ENCODE measurements at regions of chrX and their contacts with region 1.

Region 1: DNA sequence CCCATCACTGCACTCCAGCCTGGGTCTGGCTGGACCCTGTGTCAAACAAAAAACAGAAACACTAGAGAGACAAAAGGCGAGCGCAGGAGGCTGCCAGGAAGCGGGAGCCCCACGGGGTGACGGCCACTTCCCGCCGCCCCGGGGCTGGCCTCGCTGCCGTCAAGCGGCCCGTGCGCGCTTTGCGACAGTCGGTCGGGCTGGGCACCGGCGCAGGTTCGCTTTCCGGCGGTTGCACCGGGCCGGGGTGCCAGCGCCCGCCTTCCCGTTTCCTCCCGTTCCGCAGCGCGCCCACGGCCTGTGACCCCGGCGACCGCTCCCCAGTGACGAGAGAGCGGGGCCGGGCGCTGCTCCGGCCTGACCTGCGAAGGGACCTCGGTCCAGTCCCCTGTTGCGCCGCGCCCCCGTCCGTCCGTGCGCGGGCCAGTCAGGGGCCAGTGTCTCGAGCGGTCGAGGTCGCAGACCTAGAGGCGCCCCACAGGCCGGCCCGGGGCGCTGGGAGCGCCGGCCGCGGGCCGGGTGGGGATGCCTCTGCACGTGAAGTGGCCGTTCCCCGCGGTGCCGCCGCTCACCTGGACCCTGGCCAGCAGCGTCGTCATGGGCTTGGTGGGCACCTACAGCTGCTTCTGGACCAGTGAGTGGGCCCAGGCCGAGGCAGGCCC is at the start of gene TAFAZZIN:
- DNase-seq: peak; percentile 41 to 80
- H3K4me3 ChIP-seq: peak within 1 kb of the TSS; percentile 77
- H3K27ac ChIP-seq: peak within 1 kb of the TSS; percentile 32
- H3K4me1 ChIP-seq: peaks cover 19% of the 10 kb centered on the region
- H3K27me3 ChIP-seq: no peaks in the 10 kb centered on the region
- CTCF ChIP-seq: no peak
- total RNA-seq, gene TAFAZZIN: 95.8 and 134 TPM in 2 replicates

Region 2: DNA sequence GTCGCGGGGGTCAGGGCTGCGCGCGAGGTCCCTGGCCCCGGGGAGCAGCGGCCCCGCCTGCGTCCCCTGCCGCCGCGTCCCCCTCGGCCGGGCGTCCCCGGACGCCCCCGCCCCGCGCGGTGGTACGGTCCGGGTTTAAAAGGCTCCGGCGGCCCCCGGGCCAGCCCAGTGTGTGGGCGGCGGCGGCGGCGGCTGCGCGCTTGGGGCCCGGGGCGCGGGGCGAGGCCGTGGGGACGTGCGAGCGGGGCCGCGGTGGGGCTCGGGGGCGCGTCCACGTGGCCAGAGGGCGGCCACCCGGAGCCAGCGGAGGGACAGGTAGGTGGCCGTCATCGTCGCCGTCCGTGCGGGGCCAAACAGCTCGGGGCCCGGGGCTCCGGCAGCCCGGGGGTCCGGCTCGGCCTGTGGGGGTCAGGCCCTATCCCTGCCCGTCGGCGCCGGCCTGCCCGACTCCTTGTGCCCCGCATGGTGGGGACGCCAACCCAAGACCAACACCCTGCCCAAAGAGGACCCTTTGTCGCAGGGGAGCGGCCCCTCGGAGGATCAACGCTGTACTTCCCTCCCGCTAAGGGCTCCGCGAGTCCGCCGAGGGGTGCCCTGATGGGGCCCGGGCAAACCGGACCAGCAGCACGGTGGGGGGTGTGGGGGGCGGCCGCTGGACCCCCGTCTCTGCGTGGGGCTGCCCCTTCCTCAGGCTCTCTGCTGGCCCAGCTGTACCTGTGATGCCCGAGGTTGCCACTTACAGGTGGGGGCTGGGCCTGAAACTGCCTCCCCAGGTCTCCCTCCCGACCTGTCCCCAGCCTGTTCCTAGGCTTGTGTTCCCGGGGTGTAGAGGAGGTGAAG is 46.9 kb after region 1 on chrX and contains the start of gene PLXNA3:
- CTCF ChIA-PET with region 1: no interaction called
- POLR2A ChIA-PET with region 1: interaction called, 4 read pairs
- intact Hi-C with region 1: loop called (anchors 2 kb)
- DNase-seq: peak in 1 of 2 experiments; percentile 76
- H3K4me3 ChIP-seq: peak within 1 kb of the TSS; percentile 66
- H3K27ac ChIP-seq: no peak within 1 kb of the TSS
- H3K4me1 ChIP-seq: peaks cover 5% of the 10 kb centered on the region
- H3K27me3 ChIP-seq: no peaks in the 10 kb centered on the region
- CTCF ChIP-seq: no peak
- total RNA-seq, gene PLXNA3: 109 and 124 TPM in 2 replicates

Measured in PC-9 (cell line).